ENCODE measurements at regions of chr16 and their contacts with region 1.

Region 1: DNA sequence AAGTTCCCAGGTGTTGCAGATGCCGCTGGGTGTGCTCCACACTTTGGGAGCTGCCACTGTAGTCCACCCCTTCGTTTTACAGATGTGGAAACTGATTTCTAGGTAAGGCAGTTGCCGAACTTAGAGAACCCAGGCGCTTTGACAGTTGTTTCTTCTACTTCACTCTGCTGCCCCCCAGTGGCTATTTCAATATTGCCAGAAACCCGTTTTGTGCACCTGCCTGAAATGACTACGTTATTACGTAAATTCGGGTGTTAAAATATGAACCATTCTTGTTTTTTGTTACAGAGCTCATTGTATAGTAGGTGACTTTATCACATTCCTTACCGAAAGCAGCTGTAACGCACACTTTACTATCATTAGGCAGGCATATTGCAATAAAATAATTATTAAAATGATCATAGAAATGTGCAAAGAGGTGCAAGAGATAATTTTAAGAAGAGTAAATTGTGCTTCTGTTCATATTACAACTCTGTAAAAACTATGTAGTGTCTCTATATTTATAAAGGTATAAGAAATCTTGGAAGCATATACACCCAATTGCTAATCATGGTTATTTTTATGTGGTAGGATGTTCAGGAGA is 44.9 kb downstream of the OTOA start:
- DNase-seq: peak; percentile 65
- H3K4me3 ChIP-seq: no peak overlapping the region; a peak in 1 of 4 replicates
- H3K27ac ChIP-seq: no peak overlapping the region
- H3K4me1 ChIP-seq: no peaks in the 10 kb centered on the region; a peak in 1 of 4 replicates
- H3K27me3 ChIP-seq: no peaks in the 10 kb centered on the region
- CTCF ChIP-seq: peak; percentile 92
- EP300 ChIP-seq: no peak
- RAD21 ChIP-seq: peak; percentile 86

Region 2: GRCh38 chr16:21584817-21585216 is 123.8 kb before region 1 on chr16:
- CTCF ChIA-PET with region 1: interaction called, 29 read pairs
- POLR2A ChIA-PET with region 1: no interaction called
- DNase-seq: no peak
- H3K4me3 ChIP-seq: no peak overlapping the region
- H3K27ac ChIP-seq: no peak overlapping the region
- H3K4me1 ChIP-seq: no peaks in the 10 kb centered on the region
- H3K27me3 ChIP-seq: no peaks in the 10 kb centered on the region
- CTCF ChIP-seq: no peak
- EP300 ChIP-seq: no peak
- RAD21 ChIP-seq: no peak

Region 3: DNA sequence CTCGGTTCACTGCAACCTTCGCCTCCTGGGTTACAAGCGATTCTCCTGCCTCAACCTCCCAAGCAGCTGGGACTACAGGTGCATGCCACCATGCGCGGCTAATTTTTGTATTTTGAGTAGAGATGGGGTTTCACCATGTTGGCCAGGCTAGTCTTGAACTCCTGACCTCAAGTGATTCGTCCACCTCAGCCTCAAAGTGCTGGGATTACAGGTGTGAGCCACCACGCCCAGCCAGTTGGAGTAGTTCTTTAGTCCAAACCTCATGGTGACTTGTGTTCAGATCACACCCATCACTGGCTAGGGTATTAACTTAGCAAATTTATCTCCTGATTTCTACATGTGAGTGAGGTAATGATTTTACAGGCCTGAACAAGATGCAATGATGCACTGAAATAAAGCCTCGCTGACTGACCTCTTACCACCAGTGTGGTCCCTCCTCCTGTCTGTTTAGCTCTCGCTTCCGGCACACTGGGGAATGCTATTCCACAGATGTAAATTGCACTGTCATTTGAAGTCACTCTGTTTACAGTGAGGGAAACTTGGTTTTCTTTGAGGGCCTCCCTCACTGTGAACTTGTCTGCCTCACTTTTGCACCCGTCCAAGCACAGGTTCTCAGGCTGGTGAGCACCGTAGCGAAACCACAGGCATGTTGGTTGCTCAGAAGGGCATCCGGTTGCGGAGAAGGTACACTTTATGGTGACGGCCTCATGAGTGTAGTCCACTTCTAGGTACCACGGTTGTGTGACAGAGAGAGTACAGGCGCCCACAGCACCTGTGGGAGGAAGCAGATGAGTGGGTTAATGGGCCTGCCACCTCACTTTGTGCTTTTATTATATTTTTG is 61.7 kb before region 1 on chr16:
- CTCF ChIA-PET with region 1: interaction called, 16 read pairs
- POLR2A ChIA-PET with region 1: no interaction called
- DNase-seq: no peak
- H3K4me3 ChIP-seq: no peak overlapping the region
- H3K27ac ChIP-seq: no peak overlapping the region
- H3K4me1 ChIP-seq: peaks cover 0 to 5% of the 10 kb centered on the region in 2 experiments; a peak in 3 of 4 replicates
- H3K27me3 ChIP-seq: no peaks in the 10 kb centered on the region
- CTCF ChIP-seq: no peak
- EP300 ChIP-seq: no peak
- RAD21 ChIP-seq: no peak

Region 4: DNA sequence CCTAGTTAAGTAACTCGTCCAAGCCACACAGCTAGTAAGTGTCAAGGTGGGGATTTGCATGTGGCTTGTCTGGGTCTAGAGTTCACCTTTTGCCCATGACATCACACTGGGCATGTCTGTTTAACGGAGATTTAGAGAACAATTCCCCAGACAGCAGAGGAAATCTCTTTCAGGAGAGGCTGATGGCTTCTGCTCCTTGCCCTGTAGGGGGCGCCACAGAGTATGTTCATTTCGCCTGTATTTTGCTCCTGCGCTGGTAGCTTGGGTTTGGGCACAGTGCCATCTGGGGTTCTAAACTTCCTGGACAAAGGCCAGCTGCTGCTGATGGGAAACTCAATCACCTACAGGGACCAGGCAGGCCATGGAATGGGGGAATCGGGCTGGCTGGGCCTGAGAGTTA is 24.4 kb before region 1 on chr16:
- CTCF ChIA-PET with region 1: interaction called, 47 read pairs
- POLR2A ChIA-PET with region 1: no interaction called
- DNase-seq: peak; percentile 42
- H3K4me3 ChIP-seq: no peak overlapping the region; a peak in 1 of 4 replicates
- H3K27ac ChIP-seq: no peak overlapping the region
- H3K4me1 ChIP-seq: no peaks in the 10 kb centered on the region
- H3K27me3 ChIP-seq: peaks cover 4% of the 10 kb centered on the region; the same call in 1 of the 2 replicates
- CTCF ChIP-seq: peak; percentile 59
- EP300 ChIP-seq: no peak
- RAD21 ChIP-seq: no peak; the same call in 1 of the 2 replicates

Region 5: GRCh38 chr16:21698169-21699032 is 10.2 kb before region 1 on chr16:
- CTCF ChIA-PET with region 1: interaction called, 23 read pairs
- POLR2A ChIA-PET with region 1: no interaction called
- DNase-seq: no peak
- H3K4me3 ChIP-seq: no peak overlapping the region
- H3K27ac ChIP-seq: no peak overlapping the region
- H3K4me1 ChIP-seq: no peaks in the 10 kb centered on the region
- H3K27me3 ChIP-seq: no peaks in the 10 kb centered on the region; the same call in 1 of the 2 replicates
- CTCF ChIP-seq: peak; percentile 10; the same call in 1 of the 2 replicates
- EP300 ChIP-seq: no peak
- RAD21 ChIP-seq: no peak

Region 6: DNA sequence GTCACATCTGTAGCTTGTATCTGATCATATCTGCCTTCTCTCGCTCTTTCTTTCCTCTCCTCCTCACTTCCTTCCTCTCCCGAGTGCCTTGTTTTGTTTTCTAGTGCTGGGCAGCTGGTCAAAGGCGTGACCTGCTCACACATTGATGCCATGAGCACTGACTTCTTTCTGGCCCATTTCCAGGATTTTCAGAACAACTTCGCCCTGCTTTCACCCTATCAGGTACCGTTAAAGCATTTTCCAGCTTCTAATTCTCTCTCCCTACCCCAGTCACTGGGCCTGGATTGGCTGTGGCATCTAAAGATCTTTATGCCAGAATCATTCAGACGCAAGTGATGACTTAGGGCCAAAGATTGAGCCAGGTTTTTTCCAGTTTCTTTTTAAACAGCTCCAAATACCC is 10.7 kb after region 1 on chr16:
- CTCF ChIA-PET with region 1: interaction called, 54 read pairs
- POLR2A ChIA-PET with region 1: no interaction called
- DNase-seq: no peak
- H3K4me3 ChIP-seq: no peak overlapping the region
- H3K27ac ChIP-seq: no peak overlapping the region
- H3K4me1 ChIP-seq: no peaks in the 10 kb centered on the region
- H3K27me3 ChIP-seq: no peaks in the 10 kb centered on the region; the same call in 1 of the 2 replicates
- CTCF ChIP-seq: no peak
- EP300 ChIP-seq: no peak
- RAD21 ChIP-seq: no peak